ENCODE measurements at regions of chr19 and their contacts with region 1.

Region 1: DNA sequence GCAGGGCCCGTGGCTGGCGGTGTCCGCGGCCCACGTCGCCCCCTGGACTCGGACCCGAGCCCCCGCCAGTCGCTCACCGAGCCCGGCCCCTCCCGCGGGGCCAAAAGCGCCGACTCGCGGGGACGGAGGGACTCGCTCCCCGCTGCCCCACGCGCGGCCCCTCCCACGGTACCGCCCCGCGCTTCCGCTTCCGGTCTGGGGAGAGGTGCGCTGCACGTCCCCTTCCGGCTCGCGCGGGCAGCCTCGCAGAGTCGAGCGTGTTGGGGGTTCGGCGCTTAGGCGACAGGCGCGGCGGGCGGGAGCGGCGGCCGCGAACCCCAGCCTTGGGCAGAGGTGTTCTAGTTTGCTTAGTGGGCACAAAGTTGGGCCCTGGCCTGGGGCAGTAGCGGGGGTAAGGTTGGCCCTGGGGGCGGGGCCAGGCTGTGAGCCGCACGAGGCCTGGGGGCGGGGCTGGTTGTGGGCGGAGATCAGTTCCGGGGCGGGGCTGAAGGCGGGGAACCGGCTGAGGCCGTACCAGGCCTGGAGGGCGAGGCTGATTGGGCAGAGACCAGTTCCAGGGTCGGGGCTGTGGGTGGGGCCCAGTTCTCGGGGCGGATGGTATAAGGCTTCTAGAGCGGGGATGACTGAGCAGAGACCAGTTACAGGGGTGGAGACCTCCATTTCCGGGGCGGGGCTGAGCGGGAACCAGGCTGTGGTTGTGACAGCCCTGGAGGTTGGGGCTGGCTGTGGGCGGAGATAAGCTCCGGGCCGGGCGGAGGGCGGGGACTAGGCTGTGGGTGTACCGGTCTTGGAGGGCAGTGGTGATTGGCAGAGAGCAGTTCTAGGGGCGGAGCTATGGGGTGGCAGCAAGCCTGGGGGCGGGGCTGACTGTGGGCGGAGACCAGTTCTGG is at the starts of genes MBD3L1 and ZNF558:
- DNase-seq: peak; percentile 93
- ATAC-seq: peak; percentile 92
- H3K4me3 ChIP-seq: peak within 1 kb of the TSS; percentile 58 to 95
- H3K27ac ChIP-seq: peak within 1 kb of the TSS; percentile 89
- H3K4me1 ChIP-seq: peaks cover 5 to 19% of the 10 kb centered on the region in 2 experiments; a peak in 2 of 4 replicates
- H3K27me3 ChIP-seq: no peaks in the 10 kb centered on the region
- CTCF ChIP-seq: no peak
- POLR2A ChIP-seq: peak; percentile 43
- RAD21 ChIP-seq: no peak; the same call in 1 of the 2 replicates
- total RNA-seq, gene MBD3L1: not detected
- total RNA-seq, gene ZNF558: 34.2 TPM

Region 2: GRCh38 chr19:8815780-8816179 is 16.6 kb before region 1 on chr19:
- CTCF ChIA-PET with region 1: no interaction called
- POLR2A ChIA-PET with region 1: no interaction called
- RAD21 ChIA-PET with region 1: no interaction called
- intact Hi-C with region 1: no loop called
- DNase-seq: no peak
- ATAC-seq: no peak
- H3K4me3 ChIP-seq: no peak overlapping the region
- H3K27ac ChIP-seq: no peak overlapping the region
- H3K4me1 ChIP-seq: no peaks in the 10 kb centered on the region
- H3K27me3 ChIP-seq: no peaks in the 10 kb centered on the region
- CTCF ChIP-seq: no peak
- POLR2A ChIP-seq: no peak
- RAD21 ChIP-seq: no peak

Region 3: GRCh38 chr19:8988204-8988603 is 155.8 kb after region 1 on chr19:
- CTCF ChIA-PET with region 1: interaction called, 4 read pairs
- POLR2A ChIA-PET with region 1: no interaction called
- RAD21 ChIA-PET with region 1: no interaction called
- intact Hi-C with region 1: loop called (anchors 10 kb)
- DNase-seq: peak; percentile 13
- ATAC-seq: peak; percentile 52
- H3K4me3 ChIP-seq: no peak overlapping the region
- H3K27ac ChIP-seq: no peak overlapping the region
- H3K4me1 ChIP-seq: no peaks in the 10 kb centered on the region
- H3K27me3 ChIP-seq: no peaks in the 10 kb centered on the region
- CTCF ChIP-seq: peak; percentile 22 to 40 (median 29); a peak in 3 of 6 replicates
- POLR2A ChIP-seq: no peak
- RAD21 ChIP-seq: peak; percentile 48

Region 4: DNA sequence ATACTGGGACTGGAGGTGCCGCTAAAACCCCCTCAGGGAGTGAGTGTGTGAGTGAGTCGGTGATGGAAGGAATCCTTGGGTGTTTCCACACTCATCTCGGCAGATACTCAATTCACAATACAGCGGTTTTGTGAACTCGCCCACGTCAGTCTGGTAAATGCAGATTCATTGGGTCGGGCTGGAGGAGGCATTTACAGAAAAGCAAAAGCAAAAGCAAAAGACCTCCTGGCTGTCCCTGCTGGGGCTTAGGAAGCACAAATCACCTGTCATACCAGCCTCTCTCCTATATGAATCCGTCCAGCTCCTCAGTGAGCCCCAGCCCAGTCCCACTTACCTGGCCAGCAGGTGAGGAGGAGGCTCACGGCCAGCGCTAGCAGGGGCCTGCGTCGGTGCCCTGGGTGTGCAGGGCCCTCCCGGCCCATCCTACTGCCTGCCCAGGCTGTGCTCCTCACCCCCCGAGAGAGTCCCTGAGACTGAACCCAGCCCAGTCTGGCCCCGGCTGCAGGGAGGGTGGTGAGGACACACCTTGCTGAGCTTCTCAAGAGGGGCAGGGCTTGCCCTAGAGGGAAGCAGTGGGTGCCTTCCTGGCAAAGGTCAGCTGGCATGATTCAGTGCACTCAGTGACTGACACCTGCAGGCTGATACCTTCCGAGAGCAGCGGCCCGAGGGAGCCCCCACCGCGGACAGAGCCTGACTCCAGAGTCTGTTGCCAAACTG is 177.7 kb after region 1 on chr19 and contains the start of gene MUC16:
- CTCF ChIA-PET with region 1: no interaction called
- POLR2A ChIA-PET with region 1: no interaction called
- RAD21 ChIA-PET with region 1: no interaction called
- intact Hi-C with region 1: loop called (anchors 10 kb)
- DNase-seq: no peak
- ATAC-seq: peak; percentile 34; the same call in 1 of the 2 replicates
- H3K4me3 ChIP-seq: no peak within 1 kb of the TSS
- H3K27ac ChIP-seq: no peak within 1 kb of the TSS
- H3K4me1 ChIP-seq: peaks cover 0 to 8% of the 10 kb centered on the region in 2 experiments; a peak in 1 of 4 replicates
- H3K27me3 ChIP-seq: no peaks in the 10 kb centered on the region
- CTCF ChIP-seq: no peak
- POLR2A ChIP-seq: no peak
- RAD21 ChIP-seq: peak; percentile 19; the same call in 1 of the 2 replicates
- total RNA-seq, gene MUC16: 0.12 TPM

Measured in HCT116 (cell line).